ENCODE measurements at regions of chr22 and their contacts with region 1.

Region 1: DNA sequence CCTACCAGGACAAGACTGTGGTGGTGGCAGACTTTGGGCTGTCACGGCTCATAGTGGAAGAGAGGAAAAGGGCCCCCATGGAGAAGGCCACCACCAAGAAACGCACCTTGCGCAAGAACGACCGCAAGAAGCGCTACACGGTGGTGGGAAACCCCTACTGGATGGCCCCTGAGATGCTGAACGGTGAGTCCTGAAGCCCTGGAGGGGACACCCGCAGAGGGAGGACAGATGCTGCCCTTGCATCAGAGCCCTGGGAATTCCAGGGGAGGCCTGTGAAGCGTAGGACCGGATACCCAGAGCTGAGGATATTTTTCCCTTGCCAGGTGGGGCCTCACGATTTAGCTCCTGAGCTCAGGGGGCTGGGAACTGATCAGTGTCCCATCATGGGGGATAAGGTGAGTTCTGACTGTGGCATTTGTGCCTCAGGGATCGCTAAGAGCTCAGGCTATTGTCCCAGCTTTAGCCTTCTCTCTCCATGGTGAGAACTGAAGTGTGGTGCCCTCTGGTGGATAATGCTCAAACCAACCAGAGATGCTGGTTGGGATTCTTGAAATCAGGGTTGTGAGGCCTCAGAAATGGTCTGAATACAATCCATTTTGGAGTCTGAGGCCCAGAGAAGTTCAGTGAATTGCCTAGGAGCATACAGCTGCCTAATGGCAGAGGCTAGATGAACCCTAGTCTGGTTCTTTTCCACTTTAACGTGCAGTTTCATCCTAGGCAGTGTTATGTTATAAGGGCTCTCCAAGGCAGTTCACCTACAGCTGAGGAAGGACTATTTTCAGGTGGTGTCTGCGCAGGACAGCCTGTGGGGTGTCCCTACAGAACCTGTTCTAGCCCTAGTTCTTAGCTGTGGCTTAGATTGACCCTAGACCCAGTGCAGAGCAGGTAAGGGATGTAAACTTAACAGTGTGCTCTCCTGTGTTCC is 19.5 kb downstream of the PIK3IP1 start:
- DNase-seq: peak in 24 of 35 experiments; percentile 25 to 76 (median 48)
- ATAC-seq: peak; percentile 33 to 66 (median 58)
- H3K4me3 ChIP-seq: no peak overlapping the region
- H3K4me3 Mint-ChIP-seq: peak overlapping the region in 1 of 3 donors; percentile 34
- H3K27ac ChIP-seq: peak overlapping the region; percentile 48
- H3K27ac Mint-ChIP-seq: peak overlapping the region; percentile 88 to 94
- H3K4me1 ChIP-seq: peaks cover 12 to 50% of the 10 kb centered on the region in 2 experiments
- H3K4me1 Mint-ChIP-seq: peaks cover 63 to 74% (median 70%) of the 10 kb centered on the region in 3 donors
- H3K27me3 ChIP-seq: no peaks in the 10 kb centered on the region
- H3K27me3 Mint-ChIP-seq: no peaks in the 10 kb centered on the region

Region 2: GRCh38 chr22:31139866-31140716 is 132.7 kb before region 1 on chr22 and contains the start of gene PLA2G3:
- CTCF ChIA-PET with region 1: no interaction called
- POLR2A ChIA-PET with region 1: no interaction called
- DNase-seq: no peak
- ATAC-seq: no peak
- H3K4me3 ChIP-seq: no peak within 1 kb of the TSS
- H3K4me3 Mint-ChIP-seq: no peak within 1 kb of the TSS
- H3K27ac ChIP-seq: no peak within 1 kb of the TSS
- H3K27ac Mint-ChIP-seq: no peak within 1 kb of the TSS
- H3K4me1 ChIP-seq: no peaks in the 10 kb centered on the region
- H3K4me1 Mint-ChIP-seq: no peaks in the 10 kb centered on the region
- H3K27me3 ChIP-seq: peaks cover 0 to 24% of the 10 kb centered on the region in 2 experiments
- H3K27me3 Mint-ChIP-seq: peaks cover 4 to 8% of the 10 kb centered on the region in 2 donors
- total RNA-seq, gene PLA2G3: not detected

Region 3: GRCh38 chr22:31162015-31162765 is 110.6 kb before region 1 on chr22:
- CTCF ChIA-PET with region 1: interaction called in 1 of 2 experiments, 3 read pairs
- POLR2A ChIA-PET with region 1: interaction called in 1 of 2 experiments, 10 read pairs
- DNase-seq: no peak
- ATAC-seq: no peak
- H3K4me3 ChIP-seq: no peak overlapping the region
- H3K4me3 Mint-ChIP-seq: peak overlapping the region; percentile 62 to 100 (median 96)
- H3K27ac ChIP-seq: peak overlapping the region; percentile 6
- H3K27ac Mint-ChIP-seq: peak overlapping the region; percentile 78 to 100
- H3K4me1 ChIP-seq: peaks cover 7 to 21% of the 10 kb centered on the region in 2 experiments
- H3K4me1 Mint-ChIP-seq: peaks cover 42 to 56% (median 49%) of the 10 kb centered on the region in 3 donors
- H3K27me3 ChIP-seq: no peaks in the 10 kb centered on the region
- H3K27me3 Mint-ChIP-seq: no peaks in the 10 kb centered on the region

Region 4: GRCh38 chr22:31199183-31199582 is 73.6 kb before region 1 on chr22:
- CTCF ChIA-PET with region 1: interaction called, 3 read pairs
- POLR2A ChIA-PET with region 1: interaction called in 1 of 2 experiments, 17 read pairs
- DNase-seq: peak in 1 of 35 experiments; percentile 18
- ATAC-seq: no peak
- H3K4me3 ChIP-seq: no peak overlapping the region
- H3K4me3 Mint-ChIP-seq: no peak overlapping the region
- H3K27ac ChIP-seq: no peak overlapping the region
- H3K27ac Mint-ChIP-seq: peak overlapping the region in 1 of 2 donors; percentile 7
- H3K4me1 ChIP-seq: no peaks in the 10 kb centered on the region
- H3K4me1 Mint-ChIP-seq: peaks cover 0 to 3% (median 0%) of the 10 kb centered on the region in 3 donors
- H3K27me3 ChIP-seq: no peaks in the 10 kb centered on the region
- H3K27me3 Mint-ChIP-seq: no peaks in the 10 kb centered on the region

Region 5: DNA sequence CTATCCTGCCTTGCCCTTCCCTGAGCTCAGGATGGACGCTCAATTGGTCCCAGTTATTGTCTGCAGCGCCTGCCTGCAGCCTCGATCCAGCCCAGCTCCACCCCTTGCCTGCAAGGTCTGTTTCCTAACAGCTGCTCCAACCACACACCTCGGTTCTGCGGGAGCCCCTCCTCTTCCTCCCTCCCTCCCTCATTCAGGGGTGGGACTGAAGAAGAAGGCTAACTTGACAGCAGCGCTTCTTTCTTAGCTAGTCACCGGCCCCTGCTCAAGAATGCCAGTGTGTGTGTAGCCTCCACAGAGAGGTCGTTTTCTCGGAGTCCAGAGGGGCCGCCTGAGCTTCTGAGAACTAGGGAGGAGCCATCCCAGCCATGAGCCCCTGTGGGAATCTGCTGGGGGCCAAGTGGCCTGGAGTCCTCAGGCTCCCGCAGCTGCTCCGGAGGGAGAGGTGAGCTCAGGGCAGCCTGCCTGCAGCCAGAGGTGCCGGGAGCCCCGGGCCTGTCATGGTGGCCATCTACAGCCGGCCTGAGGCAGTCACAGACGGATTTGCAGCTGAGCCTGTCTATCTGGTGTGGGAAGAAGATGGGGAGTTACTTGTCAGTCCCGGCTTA is 24.5 kb before region 1 on chr22:
- CTCF ChIA-PET with region 1: interaction called, 5 to 10 read pairs
- POLR2A ChIA-PET with region 1: interaction called, 3 to 12 read pairs
- DNase-seq: peak; percentile 33 to 80 (median 65)
- ATAC-seq: peak; percentile 99 to 100 (median 100)
- H3K4me3 ChIP-seq: peak overlapping the region; percentile 5 to 40
- H3K4me3 Mint-ChIP-seq: peak overlapping the region; percentile 57 to 67 (median 64)
- H3K27ac ChIP-seq: no peak overlapping the region
- H3K27ac Mint-ChIP-seq: peak overlapping the region; percentile 63 to 72
- H3K4me1 ChIP-seq: peaks cover 4 to 28% of the 10 kb centered on the region in 2 experiments
- H3K4me1 Mint-ChIP-seq: peaks cover 15 to 41% (median 36%) of the 10 kb centered on the region in 3 donors
- H3K27me3 ChIP-seq: no peaks in the 10 kb centered on the region
- H3K27me3 Mint-ChIP-seq: no peaks in the 10 kb centered on the region

Region 6: GRCh38 chr22:31290494-31291471 is 18.0 kb after region 1 on chr22:
- CTCF ChIA-PET with region 1: interaction called, 6 to 15 read pairs
- POLR2A ChIA-PET with region 1: interaction called, 23 to 65 read pairs
- DNase-seq: peak; percentile 90 to 98 (median 96)
- ATAC-seq: peak; percentile 74 to 79 (median 76)
- H3K4me3 ChIP-seq: peak overlapping the region; percentile 58 to 69
- H3K4me3 Mint-ChIP-seq: peak overlapping the region; percentile 93 to 98 (median 97)
- H3K27ac ChIP-seq: peak overlapping the region; percentile 98
- H3K27ac Mint-ChIP-seq: peak overlapping the region; percentile 99 to 100
- H3K4me1 ChIP-seq: peaks cover 46 to 66% of the 10 kb centered on the region in 2 experiments
- H3K4me1 Mint-ChIP-seq: peaks cover 63 to 79% (median 71%) of the 10 kb centered on the region in 3 donors
- H3K27me3 ChIP-seq: no peaks in the 10 kb centered on the region
- H3K27me3 Mint-ChIP-seq: no peaks in the 10 kb centered on the region